ENCODE measurements at regions of chr15 and their contacts with region 1.

Region 1: GRCh38 chr15:101127506-101128076 is 124.3 kb downstream of the CHSY1 start:
- DNase-seq: peak; percentile 66
- ATAC-seq: peak; percentile 82
- H3K4me3 Mint-ChIP-seq: peak overlapping the region; percentile 51
- H3K27ac Mint-ChIP-seq: peak overlapping the region; percentile 95
- H3K4me1 Mint-ChIP-seq: peaks cover 52% of the 10 kb centered on the region
- H3K27me3 Mint-ChIP-seq: no peaks in the 10 kb centered on the region

Region 2: DNA sequence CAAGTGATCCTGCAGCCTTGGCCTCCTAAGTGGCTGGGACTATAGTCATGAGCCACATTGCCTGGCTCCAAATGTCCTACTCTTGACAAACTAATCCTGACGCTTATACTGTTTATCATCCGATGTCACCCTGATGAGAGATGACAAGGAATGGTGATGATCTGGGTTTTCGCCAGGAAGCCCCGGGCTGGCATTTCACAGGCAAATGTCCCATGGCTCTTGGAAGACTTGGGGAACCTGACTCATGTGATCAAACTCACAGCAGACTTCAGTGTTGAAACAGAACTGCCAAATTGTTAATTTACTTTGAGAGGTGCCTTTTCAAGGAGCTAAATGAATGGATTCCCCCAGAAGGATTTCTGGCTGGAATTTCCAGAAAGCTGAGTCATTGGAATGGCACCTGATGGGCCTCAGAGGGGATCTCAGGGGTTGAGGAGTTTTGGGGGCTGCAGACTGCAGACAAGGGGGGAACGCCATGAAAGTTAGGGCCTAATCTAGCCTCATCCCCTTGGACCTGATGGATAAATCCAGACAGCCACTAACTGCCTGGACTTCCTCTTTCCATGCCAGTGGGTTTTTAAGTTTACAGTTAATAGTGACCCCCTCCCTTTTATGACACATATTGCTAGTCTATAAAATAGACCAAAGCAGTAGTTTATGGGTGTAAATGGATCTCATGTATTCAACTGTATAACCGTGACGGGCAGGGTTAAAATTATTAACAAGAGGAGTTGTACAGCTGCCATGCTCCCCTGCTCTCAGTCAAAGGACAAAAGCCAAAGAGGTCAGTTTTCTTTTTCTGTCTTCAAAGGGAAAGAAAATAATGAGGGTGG is 22.3 kb before region 1 on chr15:
- CTCF ChIA-PET with region 1: no interaction called
- POLR2A ChIA-PET with region 1: no interaction called
- intact Hi-C with region 1: no loop called
- DNase-seq: no peak
- ATAC-seq: no peak
- H3K4me3 Mint-ChIP-seq: no peak overlapping the region
- H3K27ac Mint-ChIP-seq: peak overlapping the region; percentile 17
- H3K4me1 Mint-ChIP-seq: no peaks in the 10 kb centered on the region
- H3K27me3 Mint-ChIP-seq: no peaks in the 10 kb centered on the region

Region 3: DNA sequence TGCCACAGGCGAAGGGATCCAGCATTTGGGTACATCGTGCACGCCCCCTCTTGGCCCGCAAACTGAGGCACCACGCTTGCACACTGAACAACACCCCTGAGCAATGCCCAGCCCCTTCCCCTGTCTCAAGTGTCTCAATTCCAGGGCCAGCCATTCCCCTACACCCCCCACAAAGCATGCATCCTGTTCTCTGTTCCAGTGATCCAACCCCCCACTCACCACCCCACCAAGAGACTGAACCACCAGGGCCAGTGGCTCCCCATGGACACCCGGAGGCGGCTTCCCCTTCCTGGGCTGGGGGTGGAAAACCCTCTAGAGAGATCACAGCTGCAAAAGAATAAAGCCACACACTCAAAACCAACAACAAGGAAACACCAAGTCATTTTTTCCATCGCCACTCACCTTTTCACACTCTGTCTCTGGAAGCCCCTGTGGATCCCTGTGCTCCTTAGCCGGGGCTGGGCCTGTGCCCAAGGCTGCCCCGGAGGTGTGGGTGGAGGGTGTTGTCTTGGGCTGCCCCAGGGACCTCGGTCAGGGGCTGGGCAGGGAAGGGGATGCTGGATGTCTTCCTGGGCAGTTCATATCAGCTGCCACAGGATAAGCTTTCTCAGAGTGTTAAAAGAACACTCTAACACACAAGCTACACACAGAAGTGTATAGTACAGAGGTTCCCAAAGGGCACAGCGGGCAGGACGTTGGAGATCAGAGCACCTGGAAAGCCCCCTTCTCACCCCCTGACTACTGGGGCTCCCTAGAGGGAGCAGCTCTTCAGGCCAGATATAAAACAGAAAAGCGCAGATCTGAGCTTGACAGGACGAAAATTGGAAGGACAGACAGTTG is 31.7 kb after region 1 on chr15:
- CTCF ChIA-PET with region 1: interaction called, 4 read pairs
- POLR2A ChIA-PET with region 1: no interaction called
- intact Hi-C with region 1: loop called in 1 of 2 experiments (anchors 2 kb)
- DNase-seq: peak; percentile 71
- ATAC-seq: peak; percentile 81
- H3K4me3 Mint-ChIP-seq: peak overlapping the region; percentile 1
- H3K27ac Mint-ChIP-seq: peak overlapping the region; percentile 34
- H3K4me1 Mint-ChIP-seq: peaks cover 39% of the 10 kb centered on the region
- H3K27me3 Mint-ChIP-seq: no peaks in the 10 kb centered on the region

Region 4: DNA sequence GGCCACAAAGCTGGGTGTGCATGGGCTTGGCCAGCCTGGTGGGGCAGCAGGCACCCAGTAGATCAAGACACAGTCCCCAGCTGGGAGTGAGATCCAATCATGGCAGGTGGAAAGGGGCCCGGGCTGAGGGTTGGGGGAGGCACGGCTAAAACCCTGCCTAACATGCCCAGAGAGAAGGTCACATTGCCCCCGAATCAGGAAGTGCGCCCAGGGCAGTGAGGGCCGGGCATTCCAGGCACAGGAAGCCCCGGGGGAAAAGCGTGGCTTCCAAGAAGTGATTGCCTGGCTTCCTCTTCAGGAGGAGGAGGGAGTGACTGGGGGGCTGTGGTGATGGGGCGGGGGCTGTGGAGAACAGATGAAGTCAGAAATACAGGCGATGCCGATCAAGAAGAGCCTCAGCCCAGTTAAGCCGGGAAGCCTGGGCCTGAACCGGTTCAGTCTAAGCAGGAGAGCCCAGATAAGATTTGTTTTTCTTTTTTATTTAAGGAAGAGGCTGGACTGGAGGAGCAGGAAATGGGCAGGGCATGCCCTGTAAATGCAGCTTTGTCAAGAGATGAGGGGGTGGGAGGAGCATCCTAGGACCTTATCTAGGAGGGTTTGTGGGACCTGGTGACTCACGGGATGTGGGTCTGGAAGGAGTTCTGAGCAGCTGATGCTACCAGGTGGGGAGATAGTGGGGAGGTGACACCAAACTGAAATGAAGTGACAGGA is 40.3 kb after region 1 on chr15:
- CTCF ChIA-PET with region 1: interaction called, 4 read pairs
- POLR2A ChIA-PET with region 1: no interaction called
- intact Hi-C with region 1: loop called in 1 of 2 experiments (anchors 2 kb)
- DNase-seq: peak; percentile 86
- ATAC-seq: peak; percentile 97
- H3K4me3 Mint-ChIP-seq: peak overlapping the region; percentile 32
- H3K27ac Mint-ChIP-seq: peak overlapping the region; percentile 82
- H3K4me1 Mint-ChIP-seq: peaks cover 22% of the 10 kb centered on the region
- H3K27me3 Mint-ChIP-seq: no peaks in the 10 kb centered on the region

Region 5: GRCh38 chr15:101188637-101189408 is 61.2 kb after region 1 on chr15:
- CTCF ChIA-PET with region 1: interaction called, 3 read pairs
- POLR2A ChIA-PET with region 1: no interaction called
- intact Hi-C with region 1: loop called (anchors 1 kb)
- DNase-seq: no peak
- ATAC-seq: peak; percentile 70
- H3K4me3 Mint-ChIP-seq: peak overlapping the region; percentile 40
- H3K27ac Mint-ChIP-seq: peak overlapping the region; percentile 84
- H3K4me1 Mint-ChIP-seq: peaks cover 85% of the 10 kb centered on the region
- H3K27me3 Mint-ChIP-seq: no peaks in the 10 kb centered on the region